Mammary epithelial cell (primary cell): ENCODE measurements at regions of chr14 and their contacts with region 1.

Region 1: GRCh38 chr14:35708073-35708472 is 101.0 kb downstream of the RALGAPA1 start:
- DNase-seq: no peak
- H3K4me3 ChIP-seq: no peak overlapping the region
- H3K27ac ChIP-seq: no peak overlapping the region
- H3K4me1 ChIP-seq: no peaks in the 10 kb centered on the region
- H3K27me3 ChIP-seq: no peaks in the 10 kb centered on the region
- CTCF ChIP-seq: no peak

Region 2: DNA sequence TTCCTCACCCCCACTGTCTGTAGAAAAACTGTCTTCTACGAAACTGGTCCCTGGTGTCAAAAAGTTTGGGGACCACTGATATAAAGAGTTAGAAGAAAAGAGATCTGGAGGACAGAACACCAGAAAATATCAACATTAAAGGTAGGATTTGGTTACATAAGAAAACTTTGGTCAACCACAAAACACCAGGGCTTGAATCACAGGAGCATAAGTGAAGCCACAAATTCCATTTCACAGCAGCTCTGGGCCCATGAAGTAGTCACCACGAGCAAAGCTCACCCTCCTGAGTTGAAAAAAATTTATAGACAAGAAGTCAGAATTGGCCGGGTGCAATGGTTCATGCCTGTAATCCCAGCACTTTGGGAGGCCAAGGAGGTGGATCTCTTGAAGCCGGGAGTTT is 81.6 kb after region 1 on chr14:
- CTCF ChIA-PET with region 1: interaction called, 18 read pairs
- dilution Hi-C with region 1: no loop called
- in situ Hi-C with region 1: no loop called
- intact Hi-C with region 1: no loop called
- DNase-seq: peak; percentile 61
- H3K4me3 ChIP-seq: no peak overlapping the region
- H3K27ac ChIP-seq: no peak overlapping the region
- H3K4me1 ChIP-seq: no peaks in the 10 kb centered on the region
- H3K27me3 ChIP-seq: no peaks in the 10 kb centered on the region
- CTCF ChIP-seq: no peak

Region 3: DNA sequence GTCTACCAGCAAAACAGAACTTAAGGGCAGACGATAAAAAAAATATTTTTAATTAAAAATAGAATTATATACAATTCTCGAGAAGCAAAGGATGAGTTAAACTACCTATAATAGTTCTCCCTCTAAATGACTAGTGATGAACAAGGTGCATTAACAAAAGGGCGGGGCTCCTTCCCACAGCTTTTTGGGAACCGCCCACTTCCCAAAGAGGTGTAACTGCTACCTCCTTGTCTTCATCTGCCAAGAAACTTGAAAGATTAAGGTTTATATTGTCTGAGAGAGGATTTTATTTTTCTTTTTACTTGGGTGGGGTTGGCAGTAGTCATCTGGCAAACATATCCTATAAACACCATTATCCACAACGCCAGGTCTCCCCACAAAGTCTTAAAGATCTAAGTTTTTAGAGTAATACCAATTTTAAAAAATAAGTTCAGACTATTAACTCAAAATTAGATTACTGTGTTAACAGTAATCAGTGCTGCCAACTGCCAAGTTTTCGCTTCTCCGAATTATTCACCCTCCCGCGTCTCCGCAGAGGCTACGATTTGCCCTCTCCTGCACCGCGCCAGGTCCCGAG is 100.1 kb after region 1 on chr14:
- CTCF ChIA-PET with region 1: no interaction called
- dilution Hi-C with region 1: no loop called
- in situ Hi-C with region 1: no loop called
- intact Hi-C with region 1: loop called (anchors 2 kb)
- DNase-seq: peak; percentile 58
- H3K4me3 ChIP-seq: peak overlapping the region; percentile 60 to 77 (median 68)
- H3K27ac ChIP-seq: peak overlapping the region; percentile 43
- H3K4me1 ChIP-seq: peaks cover 8% of the 10 kb centered on the region
- H3K27me3 ChIP-seq: no peaks in the 10 kb centered on the region
- CTCF ChIP-seq: no peak

Region 4: GRCh38 chr14:36129181-36129580 is 421.1 kb after region 1 on chr14:
- CTCF ChIA-PET with region 1: no interaction called
- dilution Hi-C with region 1: no loop called
- in situ Hi-C with region 1: no loop called
- intact Hi-C with region 1: no loop called
- DNase-seq: peak; percentile 56
- H3K4me3 ChIP-seq: no peak overlapping the region
- H3K27ac ChIP-seq: no peak overlapping the region
- H3K4me1 ChIP-seq: no peaks in the 10 kb centered on the region
- H3K27me3 ChIP-seq: no peaks in the 10 kb centered on the region
- CTCF ChIP-seq: no peak